ENCODE measurements at regions of chr2 and their contacts with region 1.

Region 1: GRCh38 chr2:25197336-25198208 is 29.2 kb upstream of the POMC start:
- DNase-seq: no peak
- ATAC-seq: no peak
- H3K4me3 ChIP-seq: no peak overlapping the region
- H3K27ac ChIP-seq: no peak overlapping the region
- H3K4me1 ChIP-seq: peaks cover 0 to 9% (median 0%) of the 10 kb centered on the region in 9 donors
- H3K27me3 ChIP-seq: no peaks in the 10 kb centered on the region
- CTCF ChIP-seq: no peak

Region 2: GRCh38 chr2:24409700-24410556 is 787.6 kb before region 1 on chr2:
- intact Hi-C with region 1: loop called in 5 of 10 experiments (anchors 5 to 10 kb)
- DNase-seq: peak in 1 of 2 donors; percentile 48
- ATAC-seq: peak in 7 of 8 donors; percentile 75 to 84 (median 81)
- H3K4me3 ChIP-seq: no peak overlapping the region
- H3K27ac ChIP-seq: no peak overlapping the region
- H3K4me1 ChIP-seq: peaks cover 0 to 3% (median 0%) of the 10 kb centered on the region in 9 donors
- H3K27me3 ChIP-seq: peaks cover 0 to 14% (median 6%) of the 10 kb centered on the region in 7 donors
- CTCF ChIP-seq: peak; percentile 71 to 93 (median 84)

Region 3: GRCh38 chr2:24827321-24828237 is 370.0 kb before region 1 on chr2:
- intact Hi-C with region 1: loop called in 1 of 10 experiments (anchors 10 kb)
- DNase-seq: peak; percentile 68 to 86
- ATAC-seq: peak; percentile 89 to 97 (median 92)
- H3K4me3 ChIP-seq: no peak overlapping the region
- H3K27ac ChIP-seq: peak overlapping the region in 2 of 10 donors; percentile 8 to 26
- H3K4me1 ChIP-seq: peaks cover 4 to 22% (median 14%) of the 10 kb centered on the region in 9 donors
- H3K27me3 ChIP-seq: no peaks in the 10 kb centered on the region
- CTCF ChIP-seq: peak; percentile 81 to 96 (median 90)

Region 4: DNA sequence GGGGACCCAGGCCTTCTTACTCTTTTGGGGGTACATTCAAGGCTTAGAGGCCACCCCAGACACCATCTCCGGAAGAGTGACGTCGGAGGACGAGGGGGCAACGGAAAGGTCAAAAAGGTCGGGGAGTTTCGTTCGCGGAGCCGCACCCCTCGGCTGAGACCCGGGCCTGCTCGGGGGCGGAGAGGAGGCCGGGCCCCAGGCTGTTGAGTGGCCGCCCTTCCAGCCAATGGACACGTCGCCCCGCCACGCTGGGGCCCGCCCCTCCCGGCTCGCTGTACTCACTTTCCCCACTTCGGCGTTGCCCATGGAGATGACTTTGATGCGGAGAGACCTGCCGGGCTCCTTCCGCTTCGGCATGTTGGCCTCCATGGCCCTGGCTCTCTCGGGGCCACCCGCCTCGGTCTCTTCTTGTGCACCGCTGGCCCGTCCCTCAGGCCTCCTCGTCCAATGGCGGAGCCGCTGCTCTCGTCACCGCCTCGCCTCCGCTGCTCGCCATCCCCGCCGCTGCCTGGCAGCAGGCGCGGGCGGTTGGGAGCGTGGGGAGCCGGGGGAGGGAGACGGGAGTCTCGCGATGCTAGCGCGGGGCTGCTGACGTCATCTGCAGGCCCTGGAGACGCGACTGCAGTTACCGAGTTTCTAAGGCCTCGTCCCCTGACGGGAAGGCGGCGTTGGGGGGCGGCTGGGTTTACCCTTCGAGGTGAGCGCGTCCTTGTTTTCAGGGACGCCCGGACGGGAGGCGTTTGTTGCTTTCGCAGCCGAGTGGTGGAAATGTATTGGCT is 225.8 kb before region 1 on chr2 and contains the start of gene DNAJC27:
- intact Hi-C with region 1: loop called in 7 of 10 experiments (anchors 2 to 10 kb)
- DNase-seq: peak; percentile 98 to 99
- ATAC-seq: peak; percentile 95 to 98 (median 97)
- H3K4me3 ChIP-seq: peak within 1 kb of the TSS; percentile 65 to 93 (median 78)
- H3K27ac ChIP-seq: peak within 1 kb of the TSS; percentile 95 to 100 (median 98)
- H3K4me1 ChIP-seq: peaks cover 0 to 35% (median 11%) of the 10 kb centered on the region in 9 donors
- H3K27me3 ChIP-seq: no peaks in the 10 kb centered on the region
- CTCF ChIP-seq: peak in 1 of 9 donors; percentile 8
- total RNA-seq, gene DNAJC27: 7.2 to 13.1 (median 10.5) TPM

Region 5: DNA sequence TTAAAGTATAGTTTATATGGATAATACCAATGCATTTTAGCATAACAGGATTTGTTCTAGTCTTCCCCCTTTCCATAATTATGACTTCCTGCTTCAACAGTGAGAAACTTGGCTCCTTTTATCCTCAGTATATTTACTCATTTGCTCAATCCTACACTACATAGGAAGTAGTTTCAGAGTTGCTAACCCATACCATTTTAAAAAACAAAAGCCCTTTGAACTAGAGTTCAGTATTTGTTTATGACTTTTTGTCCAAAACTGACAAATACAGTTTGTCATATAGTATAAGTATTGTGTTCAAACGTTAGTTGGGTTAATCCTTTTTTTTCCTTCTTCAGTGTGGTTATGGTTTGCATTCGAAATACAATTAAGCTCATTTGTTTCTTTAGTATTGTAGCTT is 219.9 kb before region 1 on chr2:
- intact Hi-C with region 1: loop called in 8 of 10 experiments (anchors 2 to 10 kb)
- DNase-seq: no peak
- ATAC-seq: no peak
- H3K4me3 ChIP-seq: no peak overlapping the region
- H3K27ac ChIP-seq: no peak overlapping the region
- H3K4me1 ChIP-seq: peaks cover 0 to 24% (median 11%) of the 10 kb centered on the region in 9 donors
- H3K27me3 ChIP-seq: no peaks in the 10 kb centered on the region
- CTCF ChIP-seq: no peak

Region 6: GRCh38 chr2:24984912-24985311 is 212.7 kb before region 1 on chr2:
- intact Hi-C with region 1: loop called in 1 of 10 experiments (anchors 10 kb)
- DNase-seq: peak; percentile 36 to 81
- ATAC-seq: peak; percentile 63 to 97 (median 92)
- H3K4me3 ChIP-seq: no peak overlapping the region
- H3K27ac ChIP-seq: peak overlapping the region in 8 of 10 donors; percentile 15 to 85 (median 65)
- H3K4me1 ChIP-seq: peaks cover 4 to 28% (median 20%) of the 10 kb centered on the region in 9 donors
- H3K27me3 ChIP-seq: no peaks in the 10 kb centered on the region
- CTCF ChIP-seq: no peak